ENCODE measurements at regions of chr15 and their contacts with region 1.

Region 1: DNA sequence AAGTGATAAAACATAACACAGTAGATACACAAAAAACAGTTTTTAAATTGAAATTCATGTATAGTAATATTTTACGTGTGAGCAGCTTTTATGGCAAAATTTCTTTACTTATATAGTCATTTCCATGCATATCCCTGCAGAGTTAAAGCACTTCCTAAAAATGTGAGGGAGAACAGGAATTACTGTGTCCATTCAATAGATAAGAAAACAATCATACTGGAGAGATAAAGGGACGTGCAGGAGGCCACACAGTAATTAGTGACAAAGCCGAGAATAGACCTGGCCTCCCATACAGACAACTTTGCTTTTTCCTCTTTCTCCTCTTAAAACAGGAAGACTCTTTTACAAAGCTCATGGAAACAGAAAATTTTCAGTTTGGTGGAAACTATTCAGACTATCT is 247.5 kb downstream of the CDIN1 start:
- H3K4me3 Mint-ChIP-seq: no peak overlapping the region
- H3K27ac Mint-ChIP-seq: no peak overlapping the region
- H3K4me1 Mint-ChIP-seq: no peaks in the 10 kb centered on the region
- H3K27me3 Mint-ChIP-seq: no peaks in the 10 kb centered on the region

Region 2: GRCh38 chr15:36877796-36878683 is 51.1 kb after region 1 on chr15:
- intact Hi-C with region 1: loop called (anchors 10 kb)
- H3K4me3 Mint-ChIP-seq: peak overlapping the region; percentile 7
- H3K27ac Mint-ChIP-seq: no peak overlapping the region
- H3K4me1 Mint-ChIP-seq: no peaks in the 10 kb centered on the region
- H3K27me3 Mint-ChIP-seq: peaks cover 76% of the 10 kb centered on the region